ENCODE measurements at regions of chr3 and their contacts with region 1.

Region 1: DNA sequence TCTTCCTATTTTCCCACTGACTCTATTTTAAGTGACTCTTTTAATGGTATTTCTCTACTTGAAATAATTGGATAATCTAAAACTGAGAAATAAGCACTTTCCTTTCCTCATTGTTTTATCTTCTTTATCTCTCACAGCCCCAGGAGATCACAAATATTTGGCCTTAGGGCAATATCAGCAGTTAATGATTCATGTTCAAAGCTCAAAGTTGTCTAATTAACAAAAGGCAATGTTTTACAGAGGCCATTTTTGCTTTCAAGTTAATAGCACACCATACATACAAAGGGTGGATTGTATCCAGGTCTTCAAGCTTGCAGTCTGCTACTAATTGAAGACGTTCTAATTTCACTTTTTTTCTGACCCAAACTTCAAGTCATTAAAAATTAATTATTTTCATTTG is 120.1 kb downstream of the LRRN1 start:
- DNase-seq: no peak

Region 2: GRCh38 chr3:3664935-3665334 is 254.4 kb before region 1 on chr3:
- intact Hi-C with region 1: no loop called
- DNase-seq: no peak

Region 3: GRCh38 chr3:4241595-4242170 is 322.4 kb after region 1 on chr3:
- intact Hi-C with region 1: loop called in 1 of 2 experiments (anchors 5 kb)
- DNase-seq: no peak

Measured in posterior vena cava (tissue), 2 donors.